ENCODE measurements at regions of chr12 and their contacts with region 1.

Region 1: DNA sequence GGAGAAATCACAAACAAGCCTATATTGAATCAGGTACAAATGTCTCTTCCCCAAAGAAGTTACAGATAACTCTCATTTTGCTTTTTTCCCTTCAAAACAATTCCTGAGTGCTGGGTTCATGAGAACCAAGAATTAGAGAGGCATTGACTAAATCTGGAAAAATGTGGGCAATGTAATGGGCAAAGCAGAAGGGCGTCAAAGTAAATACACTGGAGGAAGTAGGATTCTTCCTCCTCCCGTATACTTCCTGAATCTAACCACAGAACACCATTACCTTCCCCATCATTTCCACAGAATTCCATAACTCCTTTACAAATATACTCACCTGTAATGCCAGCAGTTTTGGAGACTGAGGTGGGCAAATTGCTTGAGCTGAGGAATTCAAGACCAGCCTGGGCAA is 3.0 kb upstream of the RBMS2 start:
- DNase-seq: no peak
- H3K4me3 ChIP-seq: no peak overlapping the region
- H3K27ac ChIP-seq: no peak overlapping the region
- H3K4me1 ChIP-seq: peaks cover 5 to 61% (median 44%) of the 10 kb centered on the region in 6 donors
- H3K27me3 ChIP-seq: no peaks in the 10 kb centered on the region
- CTCF ChIP-seq: no peak
- POLR2A ChIP-seq: no peak

Region 2: GRCh38 chr12:56572288-56572687 is 53.7 kb after region 1 on chr12:
- intact Hi-C with region 1: loop called (anchors 2 kb)
- DNase-seq: no peak
- H3K4me3 ChIP-seq: no peak overlapping the region
- H3K27ac ChIP-seq: no peak overlapping the region
- H3K4me1 ChIP-seq: peaks cover 3 to 68% (median 27%) of the 10 kb centered on the region in 6 donors
- H3K27me3 ChIP-seq: no peaks in the 10 kb centered on the region
- CTCF ChIP-seq: no peak
- POLR2A ChIP-seq: no peak

Measured in spleen (tissue), 13 donors.